Activated T-helper 1 cell treated with anti-CD3 and anti-CD28 coated beads, Interleukin-12 subunit alpha, Interleukin-12 subunit beta, Interleukin-2, Interleukin-4 antibody, amounts not matched to agents 30 ng/mL and 10 ng/mL and 1 ng/mL, durations not matched to agents 14 hours and 24 hours and 36 hours (primary cell): ENCODE measurements at regions of chr17 and their contacts with region 1.

Region 1: DNA sequence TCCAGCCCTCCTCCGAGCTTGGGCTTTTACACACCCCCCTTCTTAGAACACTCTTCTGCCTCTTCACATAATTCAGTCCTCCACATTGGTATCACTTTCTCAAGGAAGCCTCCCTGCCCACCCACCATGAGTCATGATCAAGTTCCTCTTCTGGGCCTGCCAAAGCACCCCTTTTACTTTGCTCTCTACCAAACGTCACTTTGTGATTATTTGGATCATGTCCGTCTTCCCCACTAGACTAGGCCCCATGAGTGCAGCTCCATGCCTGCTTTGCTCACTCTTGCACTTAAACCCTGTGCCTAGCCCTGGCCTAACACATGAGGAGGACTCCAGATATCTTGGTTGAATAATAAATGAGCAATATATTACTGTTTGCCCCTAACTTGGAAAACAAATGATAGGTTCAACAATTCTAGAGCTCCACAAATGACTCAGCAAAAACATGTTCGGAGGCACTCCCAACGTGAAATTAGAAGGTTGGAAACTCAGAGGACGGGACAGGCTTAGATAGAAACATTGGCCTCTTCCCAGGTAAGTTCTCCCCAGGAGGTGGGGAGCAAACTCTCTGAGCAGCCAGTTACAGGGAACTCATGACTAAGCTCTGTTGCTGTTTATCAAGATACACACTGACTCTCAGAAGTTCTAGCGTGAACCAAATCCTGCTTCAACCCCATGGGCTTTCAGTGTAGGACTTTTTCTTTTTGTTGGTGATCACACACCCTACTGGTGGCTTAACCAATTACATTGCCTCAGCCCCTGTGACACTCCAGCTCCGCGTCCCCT is 28.3 kb downstream of the G6PC1 start:
- DNase-seq: no peak
- H3K4me3 Mint-ChIP-seq: no peak overlapping the region
- H3K27ac Mint-ChIP-seq: peak overlapping the region; percentile 47
- H3K4me1 Mint-ChIP-seq: peaks cover 11% of the 10 kb centered on the region
- H3K27me3 Mint-ChIP-seq: peaks cover 5% of the 10 kb centered on the region

Region 2: DNA sequence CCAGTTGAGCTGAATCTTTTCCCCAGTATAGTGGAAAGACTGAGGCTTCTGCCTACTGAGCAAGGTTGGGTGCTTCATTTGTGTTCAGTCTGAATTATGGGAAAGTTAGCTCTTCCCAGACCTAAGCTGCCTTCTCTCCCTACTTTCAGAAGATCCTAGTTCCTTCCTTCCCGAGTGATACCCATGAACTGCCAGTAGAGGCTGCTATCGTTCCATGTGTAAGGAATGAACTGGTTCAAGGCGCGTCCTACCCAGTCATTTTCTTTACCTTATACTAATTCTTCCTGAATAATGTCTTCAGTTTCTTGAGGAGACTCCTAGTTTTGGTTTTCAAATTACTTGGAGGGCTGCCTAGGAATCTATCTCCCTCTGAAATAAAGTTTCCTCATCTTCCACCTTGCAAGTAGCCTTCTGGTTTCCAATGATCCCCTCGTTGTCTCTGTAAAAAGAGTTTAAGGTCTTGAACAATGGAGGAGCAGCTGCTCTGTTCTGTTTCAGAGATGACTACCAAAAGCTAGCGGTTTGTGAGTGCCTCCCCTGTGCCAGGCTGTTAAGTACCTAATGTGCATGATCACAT is 85.5 kb before region 1 on chr17:
- intact Hi-C with region 1: loop called (anchors 1 kb)
- DNase-seq: no peak
- H3K4me3 Mint-ChIP-seq: no peak overlapping the region
- H3K27ac Mint-ChIP-seq: no peak overlapping the region
- H3K4me1 Mint-ChIP-seq: peaks cover 21% of the 10 kb centered on the region
- H3K27me3 Mint-ChIP-seq: no peaks in the 10 kb centered on the region

Region 3: DNA sequence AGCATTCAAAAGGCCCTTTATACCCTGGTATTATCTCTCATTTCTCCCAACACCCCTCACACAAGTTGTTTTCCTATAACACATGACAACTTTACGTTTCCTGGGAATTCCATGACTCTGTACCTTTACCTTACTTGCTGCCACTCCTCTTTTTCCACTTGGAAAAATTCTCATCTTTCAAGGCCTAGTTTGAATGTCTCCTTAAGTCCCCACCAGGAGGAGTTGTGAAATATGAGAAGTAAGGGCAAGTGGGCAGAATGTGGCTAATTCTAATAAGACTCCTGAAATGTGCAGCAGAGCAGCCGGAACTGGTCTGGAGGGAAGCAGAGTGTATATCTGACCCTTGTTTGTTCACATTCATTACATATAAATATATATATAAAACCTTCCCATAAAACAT is 156.6 kb after region 1 on chr17:
- intact Hi-C with region 1: no loop called
- DNase-seq: no peak
- H3K4me3 Mint-ChIP-seq: no peak overlapping the region
- H3K27ac Mint-ChIP-seq: no peak overlapping the region
- H3K4me1 Mint-ChIP-seq: no peaks in the 10 kb centered on the region
- H3K27me3 Mint-ChIP-seq: no peaks in the 10 kb centered on the region